ENCODE measurements at regions of chr2 and their contacts with region 1.

Region 1: GRCh38 chr2:108786354-108787199 is at the start of gene CCDC138:
- DNase-seq: peak; percentile 86 to 93 (median 88)
- ATAC-seq: peak; percentile 93 to 99 (median 99)
- H3K4me3 ChIP-seq: peak within 1 kb of the TSS; percentile 61 to 92 (median 78)
- H3K27ac ChIP-seq: peak within 1 kb of the TSS in 10 of 12 donors; percentile 50 to 79 (median 61)
- H3K4me1 ChIP-seq: peaks cover 0 to 15% (median 5%) of the 10 kb centered on the region in 12 donors
- H3K27me3 ChIP-seq: no peaks in the 10 kb centered on the region
- CTCF ChIP-seq: peak in 1 of 12 donors; percentile 14
- POLR2A ChIP-seq: peak in 1 of 2 donors; percentile 21
- total RNA-seq, gene CCDC138: 0.47 to 1.7 (median 1.0) TPM

Region 2: DNA sequence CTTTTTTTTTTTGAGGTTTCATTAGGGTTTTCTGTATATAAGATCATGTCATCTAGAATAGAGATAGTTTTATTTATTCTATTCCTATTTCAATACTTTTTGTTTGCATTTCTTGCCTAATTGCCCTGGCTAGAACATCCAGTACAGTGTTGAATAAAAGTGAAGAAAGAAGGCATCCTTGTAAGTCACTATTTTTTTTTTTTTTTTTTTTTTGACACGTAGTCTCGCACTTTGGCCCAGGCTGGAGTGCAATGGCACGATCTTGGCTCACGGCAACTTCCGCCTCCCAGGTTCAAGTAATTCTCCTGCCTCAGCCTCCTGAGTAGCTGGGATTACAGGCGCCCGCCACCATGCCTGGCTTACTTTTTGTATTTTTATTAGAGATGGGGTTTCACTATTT is 95.1 kb before region 1 on chr2:
- intact Hi-C with region 1: loop called in 1 of 10 experiments (anchors 10 kb)
- DNase-seq: no peak
- ATAC-seq: no peak
- H3K4me3 ChIP-seq: no peak overlapping the region
- H3K27ac ChIP-seq: no peak overlapping the region
- H3K4me1 ChIP-seq: no peaks in the 10 kb centered on the region
- H3K27me3 ChIP-seq: no peaks in the 10 kb centered on the region
- CTCF ChIP-seq: no peak
- POLR2A ChIP-seq: no peak

Region 3: GRCh38 chr2:108884619-108885018 is 98.0 kb after region 1 on chr2:
- intact Hi-C with region 1: no loop called
- DNase-seq: no peak
- ATAC-seq: no peak
- H3K4me3 ChIP-seq: no peak overlapping the region
- H3K27ac ChIP-seq: no peak overlapping the region
- H3K4me1 ChIP-seq: no peaks in the 10 kb centered on the region
- H3K27me3 ChIP-seq: no peaks in the 10 kb centered on the region
- CTCF ChIP-seq: no peak
- POLR2A ChIP-seq: no peak